Cardiac septum (tissue), 1 donor: ENCODE measurements at regions of chr1 and their contacts with region 1.

Region 1: GRCh38 chr1:151059078-151059907 is at the start of gene CDC42SE1:
- DNase-seq: peak; percentile 94
- total RNA-seq, gene CDC42SE1: 44.2 TPM

Region 2: DNA sequence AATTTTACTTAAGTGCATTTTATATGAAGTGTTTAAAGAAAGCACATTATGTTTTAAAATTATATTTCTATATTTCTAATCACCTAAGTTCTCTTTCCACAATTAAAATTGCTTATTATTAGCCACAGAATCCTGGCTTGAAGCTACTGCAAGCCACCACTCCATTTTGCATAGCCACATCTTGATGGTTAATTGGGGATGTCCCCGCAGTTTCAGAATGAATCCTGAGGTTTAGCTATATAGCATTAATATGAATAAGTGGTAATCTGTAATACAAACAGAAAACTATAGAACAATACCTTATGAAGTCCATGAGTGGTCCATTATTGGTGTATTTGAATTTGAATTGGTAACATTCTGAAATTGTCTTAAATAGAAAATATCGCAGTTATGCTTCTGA is 350.7 kb before region 1 on chr1:
- intact Hi-C with region 1: no loop called
- DNase-seq: no peak

Region 3: DNA sequence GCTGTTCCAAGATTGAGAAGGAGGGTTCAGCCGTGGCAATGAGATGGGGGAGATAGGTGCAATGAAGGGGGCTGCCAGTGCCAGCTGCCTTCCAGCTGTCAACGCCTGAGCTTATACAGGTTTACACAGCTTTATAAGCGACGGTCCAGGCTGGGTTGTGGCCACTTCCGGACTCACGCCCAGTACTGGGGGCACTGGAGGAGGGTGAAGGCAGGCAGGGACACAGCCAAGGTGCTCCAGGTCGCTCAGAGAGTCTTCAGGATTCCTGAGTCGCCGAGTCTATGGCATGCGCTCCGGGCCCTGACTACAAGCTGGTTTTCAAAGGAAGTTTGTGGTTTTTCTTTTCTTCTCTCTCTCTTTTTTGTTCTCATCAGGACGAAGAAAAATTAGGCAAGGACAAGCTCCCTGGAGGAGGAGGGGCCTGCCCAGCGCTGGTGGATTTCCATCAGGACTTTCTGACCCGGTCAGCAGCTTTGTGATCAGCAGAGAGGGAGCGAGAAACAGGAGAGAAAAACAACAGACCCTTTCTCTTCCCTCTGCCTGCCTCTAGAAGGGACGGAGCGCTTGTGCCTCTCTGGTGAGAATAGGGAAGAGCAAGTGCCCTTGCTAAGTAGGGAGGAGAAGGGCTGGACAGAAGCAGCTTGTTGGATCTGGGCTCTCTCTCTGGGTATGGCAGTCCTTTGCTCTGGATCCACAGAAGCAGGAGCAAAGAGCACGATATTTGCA is 52.8 kb before region 1 on chr1 and contains the start of gene MINDY1:
- intact Hi-C with region 1: loop called (anchors 2 kb)
- DNase-seq: peak; percentile 89
- total RNA-seq, gene MINDY1: 49.1 TPM

Region 4: DNA sequence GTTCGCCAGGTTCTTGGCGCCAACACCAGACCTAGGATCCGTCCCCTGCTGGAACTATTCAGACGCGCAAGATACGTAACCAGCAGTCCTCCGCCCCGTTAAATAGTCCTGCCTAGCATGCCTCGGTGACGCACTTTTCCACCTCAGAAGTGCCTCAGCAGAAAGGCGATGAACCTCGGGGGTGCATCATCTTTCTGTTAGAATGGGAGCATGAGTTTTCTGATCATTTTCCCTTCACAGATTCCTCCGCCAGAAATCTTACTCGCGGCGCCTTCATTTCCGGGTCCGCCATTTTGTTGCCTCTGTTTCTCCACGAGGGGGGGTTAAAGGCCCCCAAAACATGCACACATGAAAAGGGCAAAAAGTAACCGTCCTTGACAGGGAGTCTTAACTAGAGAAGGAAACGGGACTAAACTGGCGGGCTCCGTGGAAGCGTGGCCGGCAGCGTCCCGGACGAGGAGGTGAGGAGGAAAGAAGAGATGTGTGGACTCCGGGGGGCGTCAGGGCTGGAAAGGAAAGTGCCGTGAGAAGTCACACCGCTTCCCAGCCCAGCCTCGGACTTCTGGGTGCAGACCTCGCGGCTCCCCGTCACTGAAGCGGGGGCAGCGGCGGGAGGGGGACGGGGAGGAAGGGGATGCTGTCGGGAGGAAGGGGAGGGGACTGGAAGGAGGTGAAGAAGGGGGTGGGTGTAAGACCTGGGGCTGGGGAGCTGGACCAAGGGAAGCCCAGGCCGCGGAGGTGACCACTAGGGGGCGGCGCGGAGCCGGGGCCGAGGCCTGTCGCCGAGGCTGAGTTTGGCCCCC is 11.4 kb after region 1 on chr1 and contains the start of gene GABPB2:
- intact Hi-C with region 1: loop called (anchors 1 kb)
- DNase-seq: peak; percentile 96
- total RNA-seq, gene GABPB2: 11.7 TPM